HEK293T (cell line): ENCODE measurements at regions of chr9 and their contacts with region 1.

Region 1: DNA sequence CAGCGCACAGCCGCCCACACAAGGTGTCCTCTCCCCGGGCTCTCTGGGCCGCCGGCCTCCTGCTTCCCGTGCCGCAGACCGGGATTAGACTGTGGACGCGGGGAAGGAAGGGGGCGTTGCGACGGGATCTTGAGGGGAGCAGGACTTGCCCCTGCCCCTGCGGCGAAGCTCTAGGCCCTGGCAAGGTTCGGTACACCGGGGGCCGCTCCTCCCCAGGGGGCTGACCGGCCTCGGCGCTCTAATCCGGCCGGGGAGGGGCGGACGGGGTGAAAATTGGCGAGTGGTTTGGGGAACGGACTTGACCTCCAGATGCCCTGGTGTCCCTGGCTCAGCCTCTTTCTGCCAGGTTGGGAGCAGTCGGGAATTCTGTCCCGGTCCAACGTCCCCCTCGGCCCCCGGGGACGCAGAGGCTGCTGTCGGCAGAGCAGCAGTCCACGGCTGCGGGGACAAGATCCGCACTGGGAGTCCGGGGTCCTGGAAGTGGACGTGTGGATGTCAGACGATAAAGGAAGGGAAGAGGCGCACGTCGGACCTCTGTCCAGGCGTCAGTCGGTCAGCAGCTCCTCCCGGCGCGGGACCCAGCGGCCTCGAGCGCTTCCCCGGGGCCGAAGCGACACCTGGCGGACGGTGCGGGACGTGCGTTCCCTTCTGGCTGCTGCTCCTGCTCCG is 1.9 kb upstream of the CNTFR start:
- DNase-seq: peak; percentile 92

Region 2: GRCh38 chr9:34546834-34547827 is 44.3 kb before region 1 on chr9:
- CTCF ChIA-PET with region 1: interaction called, 31 read pairs
- POLR2A ChIA-PET with region 1: no interaction called
- DNase-seq: peak; percentile 75

Region 3: GRCh38 chr9:34578241-34579103 is 12.9 kb before region 1 on chr9:
- CTCF ChIA-PET with region 1: interaction called, 10 read pairs
- POLR2A ChIA-PET with region 1: interaction called, 5 read pairs
- DNase-seq: no peak